ENCODE measurements at regions of chr4 and their contacts with region 1.

Region 1: GRCh38 chr4:11912886-11913285 is 484.2 kb upstream of the HS3ST1 start:
- DNase-seq: peak; percentile 40
- H3K4me3 ChIP-seq: no peak overlapping the region
- H3K27ac ChIP-seq: no peak overlapping the region
- H3K4me1 ChIP-seq: peaks cover 10% of the 10 kb centered on the region
- H3K27me3 ChIP-seq: no peaks in the 10 kb centered on the region
- CTCF ChIP-seq: no peak
- POLR2A ChIP-seq: no peak

Region 2: GRCh38 chr4:11937941-11938340 is 25.1 kb after region 1 on chr4:
- CTCF ChIA-PET with region 1: interaction called, 11 read pairs
- POLR2A ChIA-PET with region 1: no interaction called
- dilution Hi-C with region 1: no loop called
- intact Hi-C with region 1: no loop called
- DNase-seq: no peak
- H3K4me3 ChIP-seq: no peak overlapping the region
- H3K27ac ChIP-seq: no peak overlapping the region
- H3K4me1 ChIP-seq: no peaks in the 10 kb centered on the region
- H3K27me3 ChIP-seq: no peaks in the 10 kb centered on the region
- CTCF ChIP-seq: no peak
- POLR2A ChIP-seq: no peak

Region 3: DNA sequence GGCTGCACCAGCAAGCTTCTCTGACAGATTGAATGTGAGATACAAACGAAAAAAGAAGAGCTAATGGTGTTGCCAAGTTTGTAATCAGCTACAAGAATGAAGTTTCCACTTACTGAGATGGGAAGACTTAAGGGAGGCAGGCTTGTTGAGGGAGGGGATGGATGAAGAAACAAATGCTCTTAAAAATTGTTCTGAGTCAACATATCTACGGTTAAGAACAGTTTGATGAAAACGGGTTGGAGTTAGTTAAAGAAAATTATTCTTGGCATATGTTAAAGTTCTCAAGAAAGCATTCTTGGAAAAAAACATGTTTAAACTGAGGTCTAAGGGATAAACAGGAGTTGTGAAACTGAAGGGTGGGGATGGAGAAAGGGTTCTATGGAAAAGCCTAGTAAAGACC is 332.1 kb after region 1 on chr4:
- CTCF ChIA-PET with region 1: no interaction called
- POLR2A ChIA-PET with region 1: no interaction called
- dilution Hi-C with region 1: no loop called
- intact Hi-C with region 1: no loop called
- DNase-seq: no peak
- H3K4me3 ChIP-seq: no peak overlapping the region
- H3K27ac ChIP-seq: no peak overlapping the region
- H3K4me1 ChIP-seq: no peaks in the 10 kb centered on the region
- H3K27me3 ChIP-seq: no peaks in the 10 kb centered on the region
- CTCF ChIP-seq: no peak
- POLR2A ChIP-seq: no peak